Activated T-helper 1 cell treated with anti-CD3 and anti-CD28 coated beads, Interleukin-12 subunit alpha, Interleukin-12 subunit beta, Interleukin-2, Interleukin-4 antibody, amounts not matched to agents 30 ng/mL and 10 ng/mL and 1 ng/mL, durations not matched to agents 14 hours and 24 hours and 36 hours (primary cell): ENCODE measurements at regions of chr1 and their contacts with region 1.

Region 1: GRCh38 chr1:157490467-157491165 is 61.7 kb downstream of the FCRL5 start:
- DNase-seq: peak; percentile 31
- H3K4me3 Mint-ChIP-seq: no peak overlapping the region
- H3K27ac Mint-ChIP-seq: no peak overlapping the region
- H3K4me1 Mint-ChIP-seq: no peaks in the 10 kb centered on the region
- H3K27me3 Mint-ChIP-seq: peaks cover 7% of the 10 kb centered on the region

Region 2: GRCh38 chr1:157193702-157194391 is 296.8 kb before region 1 on chr1:
- intact Hi-C with region 1: loop called (anchors 1 kb)
- DNase-seq: peak; percentile 20
- H3K4me3 Mint-ChIP-seq: no peak overlapping the region
- H3K27ac Mint-ChIP-seq: no peak overlapping the region
- H3K4me1 Mint-ChIP-seq: peaks cover 4% of the 10 kb centered on the region
- H3K27me3 Mint-ChIP-seq: peaks cover 21% of the 10 kb centered on the region

Region 3: DNA sequence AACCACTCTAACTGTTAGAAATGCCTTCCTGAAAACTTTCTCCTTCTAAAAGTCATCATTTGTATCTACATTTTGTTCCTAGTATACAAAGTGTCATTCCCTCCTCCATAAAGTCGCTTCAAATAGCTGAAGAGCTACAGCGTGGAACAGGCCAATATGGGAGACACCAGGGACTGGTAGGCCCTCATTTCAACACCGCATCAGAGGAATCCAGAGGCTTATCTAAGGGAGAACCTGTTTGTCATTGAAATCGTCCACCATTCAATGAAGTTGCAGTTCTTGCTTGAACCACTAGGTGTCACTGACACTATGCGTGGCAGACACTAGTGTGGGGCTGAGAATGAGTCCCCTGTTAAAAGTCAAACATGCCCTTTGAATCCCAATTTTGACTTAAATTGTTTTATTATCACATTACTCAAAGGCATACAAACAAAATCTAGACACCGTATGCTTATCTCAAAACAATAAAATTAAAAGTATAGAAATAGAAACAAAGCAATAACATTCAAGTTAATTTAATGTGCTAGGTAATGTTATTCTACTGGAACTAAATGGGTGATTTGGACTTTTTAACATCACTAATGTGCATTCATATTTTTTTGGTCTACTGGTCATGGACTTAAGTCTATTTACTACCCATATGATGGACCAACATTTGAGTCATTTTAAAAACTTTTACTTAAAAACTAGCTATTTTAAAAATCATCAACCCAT is 120.7 kb before region 1 on chr1:
- intact Hi-C with region 1: loop called (anchors 1 kb)
- DNase-seq: peak; percentile 29
- H3K4me3 Mint-ChIP-seq: no peak overlapping the region
- H3K27ac Mint-ChIP-seq: no peak overlapping the region
- H3K4me1 Mint-ChIP-seq: no peaks in the 10 kb centered on the region
- H3K27me3 Mint-ChIP-seq: peaks cover 20% of the 10 kb centered on the region

Region 4: DNA sequence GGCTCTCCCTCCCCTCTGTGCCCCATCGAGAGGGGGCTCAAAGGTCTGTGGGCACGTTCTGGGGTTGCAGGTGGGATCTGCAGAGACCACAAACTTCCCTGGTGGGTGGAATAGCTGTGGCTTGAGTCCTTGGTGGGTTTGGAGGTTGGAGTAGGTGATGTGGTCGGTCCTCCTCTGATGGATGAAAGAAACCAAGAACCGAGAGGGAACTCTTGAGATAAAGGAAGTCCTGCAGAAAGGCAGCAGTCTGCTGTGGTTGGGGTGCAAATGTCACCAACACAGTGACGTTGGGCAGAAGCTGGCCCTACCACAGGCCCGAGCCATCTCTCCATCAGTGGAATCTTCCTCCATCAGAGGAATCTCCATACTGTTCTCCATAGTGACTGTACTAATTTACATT is 110.1 kb before region 1 on chr1:
- intact Hi-C with region 1: loop called (anchors 1 kb)
- DNase-seq: no peak
- H3K4me3 Mint-ChIP-seq: no peak overlapping the region
- H3K27ac Mint-ChIP-seq: no peak overlapping the region
- H3K4me1 Mint-ChIP-seq: no peaks in the 10 kb centered on the region
- H3K27me3 Mint-ChIP-seq: peaks cover 17% of the 10 kb centered on the region

Region 5: DNA sequence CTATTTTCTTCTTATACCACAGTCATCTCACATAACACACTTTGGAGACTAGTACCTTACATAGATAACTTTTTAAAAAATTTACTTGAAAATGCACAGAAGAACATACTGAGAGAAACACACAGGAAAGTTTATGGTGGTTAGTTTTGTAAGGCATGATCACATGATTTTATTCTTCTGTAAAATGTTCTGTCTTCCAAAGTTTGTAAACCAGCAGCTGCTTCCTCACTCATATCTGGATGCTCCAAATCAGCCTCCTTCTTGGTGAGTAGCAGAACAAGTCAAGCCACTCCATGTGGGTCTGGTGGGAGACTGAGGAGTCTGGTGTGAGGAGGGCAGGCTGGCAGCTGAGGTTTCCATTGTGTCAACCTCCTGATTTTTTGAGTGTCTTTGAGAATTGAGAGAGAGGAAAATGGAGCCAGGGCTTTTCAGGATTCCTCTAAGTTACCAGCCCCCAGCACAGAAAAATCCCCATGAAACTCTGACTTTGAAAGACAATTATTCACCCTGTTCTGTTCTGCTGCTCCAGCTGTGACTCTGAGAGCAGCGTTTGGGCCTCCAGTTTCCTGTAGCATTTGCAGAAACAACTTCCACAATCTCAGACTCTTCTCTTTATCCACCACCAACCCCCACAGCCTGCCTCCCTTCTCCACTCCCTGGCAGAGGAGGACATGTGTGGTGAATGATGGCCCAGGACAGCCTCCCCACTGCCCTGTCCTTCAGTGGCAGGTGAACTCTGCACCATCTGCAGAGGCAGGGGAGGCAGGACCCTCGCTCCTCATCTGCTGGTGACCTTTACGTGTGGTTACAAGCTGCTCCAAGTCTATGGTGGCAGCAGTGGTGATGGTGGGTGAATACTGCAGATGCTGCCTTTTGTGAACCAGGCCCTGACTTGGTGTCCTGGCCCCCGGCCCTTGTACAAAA is 20.6 kb before region 1 on chr1:
- intact Hi-C with region 1: no loop called
- DNase-seq: no peak
- H3K4me3 Mint-ChIP-seq: no peak overlapping the region
- H3K27ac Mint-ChIP-seq: no peak overlapping the region
- H3K4me1 Mint-ChIP-seq: no peaks in the 10 kb centered on the region
- H3K27me3 Mint-ChIP-seq: peaks cover 14% of the 10 kb centered on the region